ENCODE measurements at regions of chr19 and their contacts with region 1.

Region 1: DNA sequence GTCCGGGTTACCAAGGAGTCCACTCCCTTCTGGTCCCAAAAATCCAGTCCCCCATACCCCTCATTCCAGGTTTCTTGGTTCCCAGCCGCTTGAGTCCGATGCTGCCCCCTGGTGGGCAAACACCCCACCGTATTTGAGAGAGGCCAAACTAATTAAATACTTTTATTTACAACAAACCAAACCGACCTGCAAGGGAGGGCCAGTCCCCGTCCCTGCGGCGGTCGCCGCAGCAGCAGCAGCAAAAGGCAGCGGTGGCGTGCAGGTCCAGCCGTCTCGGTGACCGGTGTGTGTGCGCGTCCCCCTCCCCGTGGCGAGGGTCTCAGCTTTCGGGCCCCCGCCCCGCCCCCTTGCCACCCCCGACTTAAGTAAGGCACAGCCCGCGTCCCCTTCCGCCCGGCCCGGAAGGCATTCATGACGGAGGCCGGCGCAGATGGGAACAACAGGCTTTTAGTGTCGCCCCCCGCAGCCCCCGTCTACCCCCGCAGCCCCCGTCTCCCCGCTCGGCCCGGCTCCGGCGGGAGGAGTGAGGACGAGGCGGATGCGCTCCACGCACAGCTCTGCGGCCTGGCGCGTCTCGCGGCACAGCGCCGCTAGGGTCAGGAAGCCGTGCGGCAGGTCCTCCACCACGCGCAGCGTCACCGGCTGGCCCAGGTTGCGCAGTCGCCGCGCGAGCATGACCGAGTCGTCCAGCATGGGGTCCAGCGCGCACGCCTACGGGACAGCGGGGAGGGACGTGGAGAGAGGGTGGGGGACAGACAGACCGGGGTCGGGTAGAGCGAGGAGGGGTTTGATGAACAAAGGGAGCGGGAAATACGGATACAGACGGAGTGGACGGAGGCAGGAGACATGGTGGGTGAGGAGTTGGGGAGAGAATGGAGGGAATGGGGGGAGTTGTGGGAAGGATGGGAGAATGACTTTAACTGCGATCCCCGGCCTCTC is 11.5 kb upstream of the CNFN start:
- DNase-seq: peak; percentile 69 to 80 (median 75)
- ATAC-seq: peak; percentile 75 to 82 (median 78)
- H3K4me3 ChIP-seq: peak overlapping the region; percentile 47 to 54 (median 53)
- H3K27ac ChIP-seq: no peak overlapping the region
- H3K4me1 ChIP-seq: no peaks in the 10 kb centered on the region
- H3K27me3 ChIP-seq: no peaks in the 10 kb centered on the region
- CTCF ChIP-seq: peak; percentile 68 to 75 (median 72)
- POLR2A ChIP-seq: no peak

Region 2: DNA sequence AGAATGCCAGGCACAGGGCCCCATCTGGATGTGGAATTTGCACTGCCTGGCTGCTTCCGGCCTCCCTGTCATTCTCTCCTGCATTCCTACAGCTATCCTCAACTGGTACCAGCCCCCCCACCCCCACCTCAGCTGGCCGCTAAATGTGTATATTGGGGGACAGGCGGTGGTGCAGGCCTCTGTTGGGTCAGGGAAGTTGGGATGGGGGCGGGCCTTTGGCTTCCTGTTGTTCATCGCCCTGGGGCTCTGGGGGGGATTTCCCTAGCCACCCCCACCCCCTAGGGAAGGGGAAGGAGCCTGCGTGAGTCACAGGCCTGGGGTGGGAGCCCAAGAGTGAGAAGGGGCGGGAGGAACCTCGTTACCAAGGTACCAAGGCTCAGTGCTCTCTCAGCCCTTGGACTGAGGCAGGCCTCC is 280.0 kb before region 1 on chr19:
- intact Hi-C with region 1: loop called in 1 of 2 experiments (anchors 10 kb)
- DNase-seq: peak; percentile 50 to 65 (median 60)
- ATAC-seq: peak; percentile 65 to 88 (median 77)
- H3K4me3 ChIP-seq: no peak overlapping the region
- H3K27ac ChIP-seq: no peak overlapping the region
- H3K4me1 ChIP-seq: no peaks in the 10 kb centered on the region
- H3K27me3 ChIP-seq: no peaks in the 10 kb centered on the region
- CTCF ChIP-seq: no peak
- POLR2A ChIP-seq: no peak

Measured in right lobe of liver (tissue), 6 donors.